Activated CD4-positive, alpha-beta T cell treated with anti-CD3 and anti-CD28 coated beads, Interleukin-2, amount 10 ng/mL, durations not matched to agents 7 days and 5 days (primary cell): ENCODE measurements at regions of chr11 and their contacts with region 1.

Region 1: GRCh38 chr11:18419040-18419439 is 6.9 kb downstream of the LDHC start:
- DNase-seq: no peak
- H3K4me3 Mint-ChIP-seq: no peak overlapping the region
- H3K27ac Mint-ChIP-seq: no peak overlapping the region
- H3K4me1 Mint-ChIP-seq: peaks cover 3% of the 10 kb centered on the region
- H3K27me3 Mint-ChIP-seq: no peaks in the 10 kb centered on the region

Region 2: GRCh38 chr11:18408558-18409242 is 10.3 kb before region 1 on chr11:
- CTCF ChIA-PET with region 1: interaction called, 3 read pairs
- POLR2A ChIA-PET with region 1: interaction called, 13 read pairs
- DNase-seq: no peak
- H3K4me3 Mint-ChIP-seq: no peak overlapping the region
- H3K27ac Mint-ChIP-seq: no peak overlapping the region
- H3K4me1 Mint-ChIP-seq: peaks cover 24% of the 10 kb centered on the region
- H3K27me3 Mint-ChIP-seq: no peaks in the 10 kb centered on the region